Activated T-helper 1 cell treated with anti-CD3 and anti-CD28 coated beads, Interleukin-12 subunit alpha, Interleukin-12 subunit beta, Interleukin-2, Interleukin-4 antibody, amounts not matched to agents 30 ng/mL and 10 ng/mL and 1 ng/mL, durations not matched to agents 14 hours and 24 hours and 36 hours (primary cell): ENCODE measurements at regions of chrX and their contacts with region 1.

Region 1: DNA sequence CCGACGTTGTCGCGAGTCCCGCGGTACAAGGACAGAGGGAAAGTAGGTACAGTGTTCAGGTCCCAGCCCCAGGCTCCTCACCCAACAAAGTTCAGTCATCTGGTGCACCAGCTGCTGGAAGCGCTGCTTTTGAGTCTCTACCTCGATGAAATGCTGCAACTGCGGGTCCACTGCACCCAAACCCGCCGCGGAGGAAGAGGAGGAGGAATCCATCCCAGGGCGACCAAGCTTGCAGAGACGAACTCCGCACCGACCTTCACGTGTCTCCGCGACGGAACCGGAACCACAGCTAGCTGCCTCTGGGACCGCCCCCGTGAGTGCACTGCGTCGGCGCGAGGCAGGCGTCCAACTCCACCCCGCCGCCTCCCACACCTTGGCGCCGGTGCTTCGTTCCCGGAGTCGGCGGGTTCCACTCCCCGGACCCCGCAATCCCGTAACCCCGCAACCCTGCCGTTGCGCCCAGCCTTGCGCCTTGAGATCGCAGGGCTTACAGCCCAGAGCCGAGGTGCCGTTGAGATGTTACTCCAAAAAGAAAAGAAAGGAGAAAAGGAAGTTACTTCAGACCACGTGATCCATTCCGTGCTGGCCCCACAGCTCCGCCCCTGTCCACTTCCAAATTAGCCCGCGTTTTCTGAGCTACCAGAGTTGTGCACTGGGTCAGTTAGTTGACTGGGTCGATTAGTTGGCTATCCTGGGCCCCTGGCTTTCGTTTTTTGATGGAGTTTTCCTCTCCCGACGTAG is at the start of gene TIMM8A:
- DNase-seq: peak; percentile 72
- H3K4me3 Mint-ChIP-seq: peak within 1 kb of the TSS; percentile 90
- H3K27ac Mint-ChIP-seq: peak within 1 kb of the TSS; percentile 80
- H3K4me1 Mint-ChIP-seq: peaks cover 5% of the 10 kb centered on the region
- H3K27me3 Mint-ChIP-seq: no peaks in the 10 kb centered on the region
- total RNA-seq, gene TIMM8A: 30.9 and 36.5 TPM in 2 replicates

Region 2: DNA sequence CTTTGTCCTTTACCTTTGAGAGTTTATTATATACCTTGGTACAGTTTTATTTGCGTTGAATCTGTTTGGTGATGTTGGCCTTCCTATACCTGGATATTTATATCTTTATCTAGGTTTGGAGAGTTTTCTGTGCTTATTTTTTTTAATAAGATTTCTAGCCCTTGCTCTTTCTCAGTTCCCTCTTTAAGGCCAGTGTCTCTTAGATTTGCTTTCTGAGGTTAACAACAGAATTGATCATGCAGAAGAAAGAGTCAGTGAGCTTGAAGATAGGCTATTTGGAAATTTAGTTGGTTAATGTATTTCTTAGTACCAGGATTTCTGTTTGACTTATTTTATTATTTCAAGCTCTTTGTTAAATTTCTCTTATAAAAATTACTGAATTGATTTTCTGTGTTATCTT is 44.8 kb before region 1 on chrX:
- intact Hi-C with region 1: no loop called
- DNase-seq: no peak
- H3K4me3 Mint-ChIP-seq: no peak overlapping the region
- H3K27ac Mint-ChIP-seq: no peak overlapping the region
- H3K4me1 Mint-ChIP-seq: no peaks in the 10 kb centered on the region
- H3K27me3 Mint-ChIP-seq: peaks cover 4% of the 10 kb centered on the region

Region 3: DNA sequence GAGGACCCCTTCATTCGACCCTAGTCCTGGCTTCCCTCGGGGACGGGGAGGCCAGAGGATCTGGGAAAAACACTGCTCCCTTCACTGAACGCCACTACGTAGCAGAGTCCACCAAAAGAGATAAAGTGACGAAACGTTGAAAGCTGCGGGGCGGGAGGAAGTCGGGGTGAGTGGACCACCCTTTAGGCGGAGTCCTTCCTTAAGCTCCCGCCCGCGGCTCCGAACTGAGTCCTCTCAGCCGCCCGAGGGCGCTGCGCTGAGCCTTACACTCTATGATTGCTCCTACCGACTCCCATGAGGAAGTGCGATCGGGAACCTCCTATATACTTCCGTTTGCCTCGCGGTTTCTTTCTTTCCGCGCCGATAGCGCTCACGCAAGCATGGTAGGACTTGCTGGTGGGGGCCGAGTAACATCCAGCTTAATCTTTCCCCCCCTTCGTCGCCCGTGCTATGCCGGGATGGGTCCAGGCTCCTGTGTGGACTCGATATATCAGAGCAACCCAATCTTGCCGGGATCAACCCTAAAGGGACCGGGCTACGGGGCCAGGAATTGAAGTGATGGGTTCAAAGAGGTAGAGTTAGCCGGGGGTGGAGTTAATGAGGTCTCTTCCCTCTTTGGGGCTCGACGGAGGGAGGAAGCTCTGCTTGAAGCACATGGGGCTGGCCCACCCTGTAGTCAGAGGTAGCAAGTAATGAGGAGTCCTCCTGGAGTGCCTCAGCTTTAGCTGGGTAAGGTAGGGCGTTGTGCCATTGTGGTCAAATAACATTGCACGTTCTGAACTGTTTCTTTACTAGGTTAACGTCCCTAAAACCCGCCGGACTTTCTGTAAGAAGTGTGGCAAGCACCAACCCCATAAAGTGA is 42.3 kb after region 1 on chrX and contains the start of gene RPL36A:
- intact Hi-C with region 1: loop called (anchors 1 kb)
- DNase-seq: peak; percentile 75
- H3K4me3 Mint-ChIP-seq: peak within 1 kb of the TSS; percentile 98
- H3K27ac Mint-ChIP-seq: peak within 1 kb of the TSS; percentile 94
- H3K4me1 Mint-ChIP-seq: peaks cover 7% of the 10 kb centered on the region
- H3K27me3 Mint-ChIP-seq: peaks cover 2% of the 10 kb centered on the region
- total RNA-seq, gene RPL36A: 226 and 269 TPM in 2 replicates

Region 4: GRCh38 chrX:101931488-101932248 is 583.0 kb after region 1 on chrX and contains the start of gene ZMAT1:
- intact Hi-C with region 1: loop called (anchors 10 kb)
- DNase-seq: peak; percentile 76
- H3K4me3 Mint-ChIP-seq: peak within 1 kb of the TSS; percentile 76
- H3K27ac Mint-ChIP-seq: peak within 1 kb of the TSS; percentile 83
- H3K4me1 Mint-ChIP-seq: peaks cover 13% of the 10 kb centered on the region
- H3K27me3 Mint-ChIP-seq: peaks cover 1% of the 10 kb centered on the region
- total RNA-seq, gene ZMAT1: 0.62 and 0.83 TPM in 2 replicates